ENCODE measurements at regions of chr6 and their contacts with region 1.

Region 1: DNA sequence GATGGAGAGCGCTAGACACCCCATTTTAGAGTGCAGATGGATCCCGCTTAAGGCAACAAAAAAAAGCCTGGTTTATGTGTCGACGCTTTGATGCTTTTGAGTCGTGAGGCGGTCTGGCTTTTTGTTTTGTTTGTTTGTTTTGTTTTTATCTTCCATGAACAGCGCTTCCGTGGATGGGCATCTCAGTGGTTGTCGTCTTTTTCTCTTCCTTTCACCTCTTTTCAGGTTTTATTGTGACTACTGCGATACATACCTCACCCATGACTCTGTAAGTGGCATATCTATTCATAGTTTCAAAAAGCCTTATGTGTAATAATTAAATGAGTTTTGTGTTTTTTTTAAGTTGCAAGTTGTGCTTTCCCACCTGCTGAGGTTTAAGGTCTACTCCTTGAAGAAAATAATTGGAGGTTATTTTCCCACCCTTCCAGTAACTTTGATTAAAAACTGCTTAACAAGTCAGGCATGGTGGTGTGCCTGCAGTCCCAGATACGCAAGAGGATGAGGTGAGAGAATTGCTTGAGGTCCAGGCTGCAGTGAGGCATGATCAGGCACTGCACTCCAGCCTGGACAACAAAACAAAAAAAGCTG is 476 bp downstream of the SNRPC start:
- DNase-seq: no peak
- H3K4me3 ChIP-seq: peak overlapping the region; percentile 86 to 96
- H3K4me3 Mint-ChIP-seq: no peak overlapping the region
- H3K27ac ChIP-seq: peak overlapping the region; percentile 74
- H3K27ac Mint-ChIP-seq: no peak overlapping the region
- H3K4me1 ChIP-seq: peaks cover 25% of the 10 kb centered on the region
- H3K4me1 Mint-ChIP-seq: peaks cover 6 to 8% (median 6%) of the 10 kb centered on the region in 4 donors
- H3K27me3 ChIP-seq: no peaks in the 10 kb centered on the region
- H3K27me3 Mint-ChIP-seq: no peaks in the 10 kb centered on the region

Region 2: DNA sequence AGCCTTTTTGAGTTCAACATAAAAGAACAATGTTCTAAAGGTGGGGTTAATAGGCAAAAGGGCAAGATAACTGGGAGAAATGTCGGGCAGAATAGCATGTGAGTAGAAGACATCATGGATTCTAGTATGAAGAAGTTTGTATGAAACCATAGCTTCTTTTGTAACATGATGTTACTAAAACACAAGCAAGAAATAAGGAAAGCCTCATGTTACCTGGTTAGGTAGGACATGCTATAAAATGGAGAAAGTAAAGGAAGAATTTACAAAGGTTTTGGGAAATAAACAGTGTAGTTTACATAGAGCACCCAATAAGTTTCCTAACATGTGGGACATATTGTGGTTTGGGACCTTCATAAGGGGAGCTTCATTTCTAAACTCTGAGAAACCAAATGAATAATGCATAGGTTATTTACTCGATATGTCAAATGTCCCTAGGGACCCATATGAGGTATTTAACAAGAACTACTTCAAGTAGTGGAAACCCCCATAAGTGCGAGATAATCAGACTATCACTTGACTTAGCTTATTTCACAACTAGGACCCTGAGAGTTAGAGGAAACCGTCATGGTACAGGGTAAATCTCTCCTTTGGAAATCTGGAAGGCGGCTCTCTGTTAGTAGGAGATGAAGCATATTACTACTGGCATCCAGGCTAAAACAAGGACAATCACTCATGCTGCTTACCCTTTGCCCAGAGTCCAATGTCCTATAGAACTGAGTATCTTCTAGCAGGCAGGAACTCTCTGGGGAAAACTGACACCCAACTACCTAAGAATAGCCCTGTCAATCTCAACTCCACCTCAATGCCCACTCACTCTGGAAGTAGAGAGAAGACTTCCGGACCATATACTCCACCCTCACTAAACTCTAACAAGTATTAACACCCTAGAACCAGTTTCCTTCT is 118.7 kb before region 1 on chr6:
- CTCF ChIA-PET with region 1: interaction called, 3 read pairs
- POLR2A ChIA-PET with region 1: interaction called, 4 read pairs
- intact Hi-C with region 1: loop called (anchors 5 kb)
- DNase-seq: no peak
- H3K4me3 ChIP-seq: no peak overlapping the region
- H3K4me3 Mint-ChIP-seq: no peak overlapping the region
- H3K27ac ChIP-seq: no peak overlapping the region
- H3K27ac Mint-ChIP-seq: peak overlapping the region in 5 of 7 donors; percentile 26 to 87 (median 46)
- H3K4me1 ChIP-seq: peaks cover 3% of the 10 kb centered on the region
- H3K4me1 Mint-ChIP-seq: peaks cover 5 to 23% (median 14%) of the 10 kb centered on the region in 4 donors
- H3K27me3 ChIP-seq: no peaks in the 10 kb centered on the region
- H3K27me3 Mint-ChIP-seq: no peaks in the 10 kb centered on the region

Region 3: DNA sequence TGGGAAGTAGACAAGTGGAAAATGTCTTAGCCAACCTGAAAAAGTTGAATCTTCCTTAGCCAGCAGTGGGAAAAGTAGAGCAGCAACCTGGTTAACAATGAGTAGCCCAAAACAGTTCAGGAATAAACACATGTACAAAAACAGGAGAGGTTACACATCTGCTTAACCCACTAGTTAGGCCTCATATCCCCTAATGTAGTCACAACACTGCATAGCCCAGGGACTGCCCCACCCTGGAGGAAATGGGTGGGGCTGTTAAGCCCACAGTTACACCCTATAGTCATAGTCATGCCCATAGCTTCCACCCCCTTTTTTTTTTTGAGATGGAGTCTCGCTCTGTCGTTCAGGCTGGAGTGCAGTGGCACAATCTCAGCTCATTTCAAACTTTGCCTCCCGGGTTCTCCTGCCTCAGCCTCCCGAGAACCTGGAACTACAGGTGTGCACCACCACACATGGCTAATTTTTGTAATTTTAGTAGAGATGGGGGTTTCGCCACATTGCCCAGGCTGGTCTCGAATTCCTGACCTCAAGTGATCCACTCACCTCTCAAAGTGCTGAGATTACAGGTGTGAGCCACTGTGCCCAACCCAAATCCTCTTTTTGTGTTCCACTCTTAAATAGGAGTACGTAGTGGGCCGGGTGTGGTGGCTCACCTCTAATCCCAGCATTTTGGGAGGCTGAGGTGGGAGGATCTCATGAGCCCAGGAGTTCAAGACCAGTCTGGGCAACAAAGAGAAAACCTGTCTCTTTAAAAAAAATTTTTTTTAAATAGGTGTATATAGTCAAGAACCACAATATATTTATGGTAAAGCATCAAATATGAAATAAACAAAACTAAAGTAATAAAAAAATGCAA is 85.8 kb before region 1 on chr6:
- CTCF ChIA-PET with region 1: interaction called, 5 read pairs
- POLR2A ChIA-PET with region 1: interaction called, 19 read pairs
- intact Hi-C with region 1: loop called (anchors 1 kb)
- DNase-seq: peak; percentile 78 to 92 (median 85)
- H3K4me3 ChIP-seq: peak overlapping the region; percentile 32 to 43
- H3K4me3 Mint-ChIP-seq: peak overlapping the region; percentile 57 to 93 (median 82)
- H3K27ac ChIP-seq: peak overlapping the region; percentile 79
- H3K27ac Mint-ChIP-seq: peak overlapping the region; percentile 92 to 100 (median 97)
- H3K4me1 ChIP-seq: peaks cover 79% of the 10 kb centered on the region
- H3K4me1 Mint-ChIP-seq: peaks cover 40 to 79% (median 60%) of the 10 kb centered on the region in 4 donors
- H3K27me3 ChIP-seq: no peaks in the 10 kb centered on the region
- H3K27me3 Mint-ChIP-seq: peaks cover 0 to 2% of the 10 kb centered on the region in 2 donors

Region 4: DNA sequence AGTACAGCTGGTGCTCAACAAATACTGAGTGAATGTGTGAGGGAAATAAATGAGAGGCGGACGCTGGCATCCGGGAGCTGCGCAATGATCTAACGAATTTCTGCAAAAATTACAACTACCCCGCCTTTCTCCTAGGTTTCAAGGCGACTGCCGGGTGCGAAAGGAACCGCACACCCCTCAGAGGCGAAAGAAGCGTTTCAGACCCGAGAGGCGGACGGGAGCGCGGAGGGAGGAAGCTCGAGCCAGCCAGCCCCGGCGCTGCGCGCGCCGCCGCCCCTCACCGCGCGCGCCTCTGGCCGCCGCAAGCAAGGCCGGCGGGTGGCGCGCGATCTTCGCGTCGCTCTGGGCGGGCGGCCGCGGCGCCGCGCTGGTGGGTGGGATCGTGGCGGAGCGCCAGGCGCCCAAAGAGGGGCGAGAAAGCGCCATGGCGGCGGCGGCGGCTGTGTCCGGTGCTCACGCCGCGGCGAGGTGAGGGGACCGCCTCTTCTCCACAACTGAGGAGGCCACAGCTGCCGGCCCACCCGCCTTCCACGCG is 34.0 kb after region 1 on chr6 and contains the start of gene BLTP3A:
- CTCF ChIA-PET with region 1: interaction called, 8 read pairs
- POLR2A ChIA-PET with region 1: interaction called, 39 read pairs
- intact Hi-C with region 1: loop called (anchors 1 kb)
- DNase-seq: peak; percentile 74 to 78 (median 75)
- H3K4me3 ChIP-seq: peak within 1 kb of the TSS; percentile 79 to 85
- H3K4me3 Mint-ChIP-seq: peak within 1 kb of the TSS; percentile 91 to 99 (median 98)
- H3K27ac ChIP-seq: peak within 1 kb of the TSS; percentile 72
- H3K27ac Mint-ChIP-seq: peak within 1 kb of the TSS; percentile 91 to 97 (median 95)
- H3K4me1 ChIP-seq: peaks cover 23% of the 10 kb centered on the region
- H3K4me1 Mint-ChIP-seq: peaks cover 15 to 36% (median 21%) of the 10 kb centered on the region in 4 donors
- H3K27me3 ChIP-seq: no peaks in the 10 kb centered on the region
- H3K27me3 Mint-ChIP-seq: no peaks in the 10 kb centered on the region
- total RNA-seq, gene BLTP3A: 11.5 to 12.0 TPM